ENCODE measurements at regions of chr10 and their contacts with region 1.

Region 1: GRCh38 chr10:11515596-11516430 is 95.6 kb downstream of the USP6NL start:
- DNase-seq: peak; percentile 72 to 86 (median 81)
- H3K4me3 ChIP-seq: peak overlapping the region in 1 of 7 experiments; percentile 18
- H3K27ac ChIP-seq: no peak overlapping the region
- H3K4me1 ChIP-seq: peaks cover 9 to 20% (median 14%) of the 10 kb centered on the region in 4 experiments
- H3K27me3 ChIP-seq: no peaks in the 10 kb centered on the region

Region 2: DNA sequence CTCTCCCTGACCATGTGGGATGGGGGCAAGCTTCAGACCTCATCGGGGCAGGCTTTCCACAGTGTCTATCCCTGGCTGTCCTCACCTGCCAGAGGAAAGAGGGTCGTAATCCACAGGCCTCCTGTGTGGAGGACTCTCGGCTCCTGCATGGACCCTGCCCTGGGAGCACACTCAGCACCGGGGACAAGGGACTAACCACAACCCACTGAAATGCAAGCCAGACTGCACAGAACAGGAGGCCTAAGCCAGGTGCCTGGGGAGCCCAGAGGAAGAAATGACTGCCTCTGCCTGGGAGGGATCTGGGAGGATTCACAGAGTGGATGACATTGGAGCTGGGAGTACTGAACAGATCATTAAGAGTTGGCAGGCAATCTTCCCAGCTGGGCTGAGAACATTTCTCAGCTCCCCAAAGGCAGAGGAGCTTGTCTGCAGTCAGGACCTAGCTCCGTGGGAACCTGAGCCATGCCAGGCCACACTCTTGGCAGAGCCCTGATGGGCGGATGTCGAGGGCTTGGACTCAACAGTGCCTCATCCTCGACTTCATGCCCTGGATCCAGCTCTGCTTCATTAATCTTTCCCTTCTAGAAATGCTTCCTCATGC is 117.7 kb before region 1 on chr10:
- CTCF ChIA-PET with region 1: no interaction called
- POLR2A ChIA-PET with region 1: no interaction called
- DNase-seq: no peak
- H3K4me3 ChIP-seq: no peak overlapping the region
- H3K27ac ChIP-seq: no peak overlapping the region
- H3K4me1 ChIP-seq: peaks cover 0 to 30% (median 23%) of the 10 kb centered on the region in 4 experiments
- H3K27me3 ChIP-seq: no peaks in the 10 kb centered on the region

Region 3: DNA sequence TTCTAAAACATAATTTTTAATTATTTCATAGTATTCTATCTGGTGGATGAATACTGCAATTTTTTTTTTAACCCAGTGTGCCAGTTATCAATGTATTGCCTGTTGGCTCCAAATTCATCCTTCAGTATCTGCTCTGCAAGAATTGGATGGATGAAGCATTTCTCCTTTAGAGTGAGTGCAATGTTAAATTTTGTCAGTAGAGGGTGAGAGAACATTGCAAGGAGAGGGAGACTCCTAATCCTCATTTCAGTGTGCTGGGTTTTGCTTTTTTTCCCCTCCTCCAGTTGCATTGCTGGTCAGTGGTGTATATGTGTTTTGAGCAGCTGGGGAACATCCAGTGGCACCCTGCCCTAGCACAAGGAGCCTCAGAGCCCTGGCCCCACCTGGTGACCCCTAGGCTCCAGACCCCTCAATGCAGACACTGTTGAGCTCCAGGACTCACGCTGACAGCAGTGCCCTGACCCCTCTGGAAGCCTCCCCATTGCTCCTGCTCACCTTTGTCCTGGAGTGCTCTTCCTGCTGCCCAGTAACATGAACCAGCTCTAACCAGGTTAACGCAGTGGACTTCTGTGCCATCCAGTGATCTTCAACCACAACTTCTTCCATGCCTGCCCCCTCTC is 103.8 kb before region 1 on chr10:
- CTCF ChIA-PET with region 1: no interaction called
- POLR2A ChIA-PET with region 1: no interaction called
- DNase-seq: peak in 2 of 3 donors; percentile 10 to 26
- H3K4me3 ChIP-seq: no peak overlapping the region
- H3K27ac ChIP-seq: no peak overlapping the region
- H3K4me1 ChIP-seq: peaks cover 0 to 5% (median 0%) of the 10 kb centered on the region in 4 experiments
- H3K27me3 ChIP-seq: no peaks in the 10 kb centered on the region

Region 4: DNA sequence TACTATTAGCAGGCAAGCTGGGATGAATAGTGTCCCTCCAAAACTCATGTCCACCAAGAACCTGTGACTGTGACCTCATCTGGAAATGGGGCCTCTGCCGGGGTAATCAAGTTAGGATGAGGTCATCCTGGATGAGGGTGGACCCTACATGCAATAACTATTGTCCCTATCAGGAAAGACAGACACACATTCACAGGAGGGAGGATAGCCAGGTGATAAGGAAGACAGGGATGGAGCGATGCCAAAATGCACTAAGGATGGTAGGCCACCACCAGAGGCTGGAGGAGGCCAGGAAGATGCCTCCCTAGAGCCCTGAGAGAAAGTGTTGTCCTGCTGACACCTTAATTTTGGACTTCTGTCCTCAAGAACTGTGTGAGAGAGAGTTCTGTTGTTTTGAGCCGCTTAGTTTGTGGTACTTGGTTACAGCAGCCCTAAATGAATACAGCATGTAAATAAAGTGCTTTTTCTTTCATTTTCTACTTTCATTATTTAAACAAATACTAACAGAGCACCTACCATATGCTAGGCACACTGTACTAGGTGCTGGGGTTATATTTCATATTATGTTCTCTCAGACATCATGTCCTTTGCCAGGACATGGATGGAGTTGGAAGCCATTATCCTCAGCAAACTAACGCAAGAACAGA is 16.3 kb before region 1 on chr10:
- CTCF ChIA-PET with region 1: interaction called, 10 read pairs
- POLR2A ChIA-PET with region 1: no interaction called
- DNase-seq: no peak
- H3K4me3 ChIP-seq: no peak overlapping the region
- H3K27ac ChIP-seq: no peak overlapping the region
- H3K4me1 ChIP-seq: no peaks in the 10 kb centered on the region
- H3K27me3 ChIP-seq: no peaks in the 10 kb centered on the region

Region 5: DNA sequence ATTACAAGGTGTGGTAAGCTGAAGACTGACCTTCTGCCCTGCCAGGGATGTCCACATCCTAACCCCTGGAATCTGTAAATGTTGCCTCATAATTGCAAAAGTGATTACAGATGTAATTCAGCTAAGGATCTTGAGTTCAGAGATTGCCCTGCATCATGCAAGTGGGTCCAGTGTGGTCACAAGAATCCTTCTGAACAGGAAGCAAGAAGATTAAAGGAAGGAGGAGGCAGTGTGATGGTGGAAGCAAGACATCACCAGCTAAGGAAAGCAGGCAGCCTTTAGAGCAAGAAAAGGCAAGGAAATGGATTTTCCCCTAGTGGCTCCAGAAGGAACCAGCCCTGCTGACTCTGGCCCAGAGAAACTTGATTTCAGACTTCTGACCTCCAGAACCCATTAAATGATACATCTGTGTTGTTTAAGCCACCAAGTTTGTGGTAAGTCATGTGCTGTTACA is 17.5 kb after region 1 on chr10:
- CTCF ChIA-PET with region 1: interaction called, 15 read pairs
- POLR2A ChIA-PET with region 1: no interaction called
- DNase-seq: peak in 2 of 3 donors; percentile 66 to 73
- H3K4me3 ChIP-seq: no peak overlapping the region
- H3K27ac ChIP-seq: no peak overlapping the region
- H3K4me1 ChIP-seq: peaks cover 20 to 57% (median 38%) of the 10 kb centered on the region in 4 experiments
- H3K27me3 ChIP-seq: no peaks in the 10 kb centered on the region

Region 6: DNA sequence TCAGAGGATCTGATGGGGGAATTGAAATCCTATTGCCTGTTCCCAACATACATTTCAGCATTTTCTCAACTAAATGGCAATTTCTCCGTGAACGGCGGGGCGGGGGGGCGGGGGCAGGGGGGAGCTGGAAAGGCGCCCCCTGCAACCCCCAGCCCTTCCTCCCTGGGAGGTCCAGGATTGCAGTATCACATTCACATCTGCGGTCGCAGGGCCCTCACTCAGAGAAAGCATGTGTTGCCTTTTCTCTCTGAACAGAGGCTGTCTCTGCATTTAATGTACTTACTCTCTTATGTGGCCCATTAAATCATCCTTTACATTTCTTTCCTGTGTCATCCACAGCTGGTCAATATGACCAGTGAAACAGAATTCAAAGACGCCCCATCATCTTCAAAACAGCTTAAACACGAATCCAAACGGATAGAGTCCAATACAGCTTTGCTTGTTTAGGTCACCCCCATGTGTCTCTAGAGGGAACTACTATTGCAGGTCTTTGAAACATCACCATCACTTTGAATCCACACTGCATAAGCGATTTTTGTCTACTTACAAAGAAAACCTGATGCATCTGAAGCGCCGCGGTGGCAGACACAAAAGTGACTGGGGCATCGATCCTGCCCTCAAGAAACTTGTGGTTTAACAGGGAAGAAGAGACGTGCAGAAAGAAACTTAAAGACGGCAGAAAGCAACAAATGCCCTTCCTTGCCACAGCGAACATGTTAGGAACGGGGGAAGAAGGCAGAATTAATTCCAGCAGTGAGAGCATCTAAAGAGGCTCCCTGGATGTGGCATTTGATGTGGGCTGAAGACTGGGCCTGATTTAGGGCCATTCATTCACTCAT is 209.3 kb after region 1 on chr10:
- CTCF ChIA-PET with region 1: interaction called, 67 read pairs
- POLR2A ChIA-PET with region 1: no interaction called
- DNase-seq: peak; percentile 72 to 87 (median 83)
- H3K4me3 ChIP-seq: no peak overlapping the region
- H3K27ac ChIP-seq: no peak overlapping the region
- H3K4me1 ChIP-seq: peaks cover 0 to 20% (median 3%) of the 10 kb centered on the region in 4 experiments
- H3K27me3 ChIP-seq: no peaks in the 10 kb centered on the region